Left ventricle myocardium inferior (tissue), 1 donor: ENCODE measurements at regions of chr17 and their contacts with region 1.

Region 1: DNA sequence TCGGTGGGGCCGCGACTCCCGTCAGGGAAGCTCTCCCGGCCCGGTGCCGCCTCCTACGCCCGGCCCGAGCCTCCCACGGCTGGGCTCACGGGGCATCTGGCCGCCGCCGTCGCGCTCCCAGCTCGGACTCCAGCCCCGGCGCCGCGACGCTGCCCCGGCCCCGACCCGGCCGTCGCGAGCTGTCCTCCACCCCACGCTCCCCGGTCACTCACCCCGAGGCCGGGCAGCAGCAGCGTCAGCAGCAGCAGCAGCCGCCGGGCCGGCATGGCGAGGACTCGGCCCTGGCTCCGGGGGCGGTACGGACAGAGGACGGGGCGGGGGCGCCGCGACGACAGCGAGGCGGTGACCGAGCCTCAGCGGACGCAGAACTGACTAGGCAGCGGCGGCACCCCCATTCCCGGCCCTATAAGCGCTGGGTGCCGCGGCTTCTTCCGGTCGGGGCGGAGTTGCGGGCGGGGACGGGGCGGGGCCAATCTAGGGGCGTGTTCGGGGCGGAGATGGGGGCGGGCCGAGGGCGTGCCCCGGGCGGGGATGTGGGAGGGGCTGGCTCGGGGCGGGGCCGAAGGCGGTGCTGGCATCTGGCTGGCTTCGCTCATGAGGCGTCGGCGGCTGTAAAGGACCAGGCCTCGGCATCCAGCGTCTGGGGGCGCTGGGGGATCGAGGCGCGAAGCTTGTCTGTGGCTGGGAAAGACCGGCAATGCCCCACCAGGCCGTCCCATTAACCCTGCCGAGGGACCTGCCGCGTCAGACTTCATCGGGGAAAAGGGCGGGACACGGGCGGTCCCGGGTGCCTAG is at the start of gene ERN1:
- DNase-seq: peak; percentile 95
- H3K4me3 ChIP-seq: peak within 1 kb of the TSS; percentile 81
- H3K27ac ChIP-seq: peak within 1 kb of the TSS; percentile 97
- H3K4me1 ChIP-seq: peaks cover 46% of the 10 kb centered on the region
- H3K27me3 ChIP-seq: no peaks in the 10 kb centered on the region
- CTCF ChIP-seq: no peak
- total RNA-seq, gene ERN1: 9.3 TPM

Region 2: GRCh38 chr17:63904316-63904715 is 225.6 kb before region 1 on chr17:
- intact Hi-C with region 1: loop called (anchors 10 kb)
- DNase-seq: no peak
- H3K4me3 ChIP-seq: no peak overlapping the region
- H3K27ac ChIP-seq: no peak overlapping the region
- H3K4me1 ChIP-seq: no peaks in the 10 kb centered on the region
- H3K27me3 ChIP-seq: peaks cover 2% of the 10 kb centered on the region
- CTCF ChIP-seq: no peak

Region 3: GRCh38 chr17:63988741-63989621 is 141.0 kb before region 1 on chr17:
- intact Hi-C with region 1: no loop called
- DNase-seq: peak; percentile 11
- H3K4me3 ChIP-seq: no peak overlapping the region
- H3K27ac ChIP-seq: no peak overlapping the region
- H3K4me1 ChIP-seq: peaks cover 58% of the 10 kb centered on the region
- H3K27me3 ChIP-seq: peaks cover 30% of the 10 kb centered on the region
- CTCF ChIP-seq: no peak

Region 4: GRCh38 chr17:64025732-64026294 is 104.1 kb before region 1 on chr17:
- intact Hi-C with region 1: loop called (anchors 5 kb)
- DNase-seq: peak; percentile 73
- H3K4me3 ChIP-seq: peak overlapping the region; percentile 41
- H3K27ac ChIP-seq: peak overlapping the region; percentile 37
- H3K4me1 ChIP-seq: peaks cover 22% of the 10 kb centered on the region
- H3K27me3 ChIP-seq: no peaks in the 10 kb centered on the region
- CTCF ChIP-seq: peak; percentile 96

Region 5: GRCh38 chr17:64051153-64051552 is 78.8 kb before region 1 on chr17:
- intact Hi-C with region 1: no loop called
- DNase-seq: no peak
- H3K4me3 ChIP-seq: no peak overlapping the region
- H3K27ac ChIP-seq: no peak overlapping the region
- H3K4me1 ChIP-seq: no peaks in the 10 kb centered on the region
- H3K27me3 ChIP-seq: no peaks in the 10 kb centered on the region
- CTCF ChIP-seq: no peak

Region 6: GRCh38 chr17:64063766-64064224 is 66.2 kb before region 1 on chr17:
- intact Hi-C with region 1: loop called (anchors 5 kb)
- DNase-seq: peak; percentile 45
- H3K4me3 ChIP-seq: no peak overlapping the region
- H3K27ac ChIP-seq: no peak overlapping the region
- H3K4me1 ChIP-seq: no peaks in the 10 kb centered on the region
- H3K27me3 ChIP-seq: no peaks in the 10 kb centered on the region
- CTCF ChIP-seq: peak; percentile 63

Region 7: GRCh38 chr17:64281962-64282727 is 152.2 kb after region 1 on chr17:
- intact Hi-C with region 1: no loop called
- DNase-seq: peak; percentile 38
- H3K4me3 ChIP-seq: peak overlapping the region; percentile 9
- H3K27ac ChIP-seq: no peak overlapping the region
- H3K4me1 ChIP-seq: peaks cover 30% of the 10 kb centered on the region
- H3K27me3 ChIP-seq: no peaks in the 10 kb centered on the region
- CTCF ChIP-seq: peak; percentile 86